ENCODE measurements at regions of chr3 and their contacts with region 1.

Region 1: DNA sequence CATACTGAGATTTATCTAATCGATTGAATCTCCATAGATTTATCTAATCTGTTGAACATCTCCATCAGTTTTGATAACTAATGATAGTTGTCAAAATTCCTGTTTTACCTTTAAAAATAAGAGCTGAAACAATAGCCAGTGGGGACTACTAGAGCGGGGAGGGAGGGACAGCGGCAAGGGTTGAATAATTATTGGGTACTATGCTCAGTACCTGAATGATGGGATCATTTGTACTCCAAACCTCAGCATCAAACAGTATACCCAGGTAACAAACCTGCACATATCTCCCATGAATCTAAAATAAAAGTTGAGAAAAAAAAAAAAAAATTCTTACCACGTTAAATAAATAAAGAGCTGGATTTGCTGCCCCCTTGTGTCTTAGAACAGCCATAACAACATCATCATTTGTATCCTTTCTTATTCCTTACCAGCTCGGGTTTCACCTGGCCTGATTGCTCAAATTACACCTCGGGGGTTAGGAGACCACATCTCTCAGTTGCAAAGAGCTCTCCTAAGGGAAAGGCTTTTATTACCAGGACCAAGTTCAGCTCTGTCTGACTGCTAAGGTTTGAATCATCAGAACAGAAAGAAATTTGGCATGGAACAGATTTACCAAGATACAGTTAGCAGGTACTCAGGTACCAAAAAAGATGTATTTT is 25.7 kb upstream of the RPL39L start:
- H3K4me3 Mint-ChIP-seq: no peak overlapping the region
- H3K27ac Mint-ChIP-seq: no peak overlapping the region
- H3K4me1 Mint-ChIP-seq: peaks cover 6% of the 10 kb centered on the region
- H3K27me3 Mint-ChIP-seq: peaks cover 12% of the 10 kb centered on the region

Region 2: DNA sequence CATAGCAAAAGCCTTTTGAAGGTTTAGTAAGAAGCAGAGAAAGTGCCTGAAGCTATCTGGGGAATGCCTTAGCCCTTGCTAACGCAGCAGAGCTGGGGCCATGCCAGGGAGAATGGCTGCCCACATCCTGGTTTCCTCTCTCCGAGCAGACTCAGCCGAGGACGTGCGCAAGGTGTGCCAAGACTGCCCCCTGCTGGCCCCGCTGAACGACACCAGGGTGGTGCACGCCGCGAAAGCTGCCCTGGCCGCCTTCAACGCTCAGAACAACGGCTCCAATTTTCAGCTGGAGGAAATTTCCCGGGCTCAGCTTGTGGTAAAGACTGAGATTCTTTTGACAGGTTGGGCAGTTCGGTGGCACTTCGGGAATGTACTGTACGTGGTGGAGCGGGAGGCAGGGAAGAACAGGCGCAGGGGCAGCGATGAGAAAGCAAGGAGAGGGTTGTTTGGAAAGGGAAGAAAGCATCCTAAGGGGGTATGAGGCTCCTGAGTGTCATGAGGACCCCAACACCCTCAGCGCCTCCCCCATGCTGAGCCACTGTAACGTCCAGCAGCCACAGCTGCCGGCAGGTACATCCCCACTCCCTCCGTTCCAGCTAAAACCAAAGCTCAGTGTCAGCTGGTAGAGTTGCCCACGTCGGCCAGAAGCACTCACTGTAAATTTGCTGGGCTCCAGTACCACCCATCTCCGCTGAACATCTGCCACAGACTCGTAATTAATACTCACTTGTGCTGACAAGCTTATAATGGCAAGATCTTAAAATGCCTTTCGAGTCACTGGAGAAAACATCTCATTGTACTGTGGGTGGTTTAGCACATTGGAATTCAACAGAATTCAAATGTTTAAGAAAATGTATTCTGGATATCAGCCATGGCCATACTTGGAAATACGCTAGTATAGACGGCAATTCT is 547.7 kb before region 1 on chr3:
- intact Hi-C with region 1: loop called (anchors 10 kb)
- H3K4me3 Mint-ChIP-seq: peak overlapping the region; percentile 60
- H3K27ac Mint-ChIP-seq: no peak overlapping the region
- H3K4me1 Mint-ChIP-seq: peaks cover 14% of the 10 kb centered on the region
- H3K27me3 Mint-ChIP-seq: peaks cover 46% of the 10 kb centered on the region

Region 3: GRCh38 chr3:186849374-186849975 is 315.5 kb before region 1 on chr3:
- intact Hi-C with region 1: loop called (anchors 5 kb)
- H3K4me3 Mint-ChIP-seq: no peak overlapping the region
- H3K27ac Mint-ChIP-seq: no peak overlapping the region
- H3K4me1 Mint-ChIP-seq: peaks cover 47% of the 10 kb centered on the region
- H3K27me3 Mint-ChIP-seq: peaks cover 4% of the 10 kb centered on the region

Region 4: DNA sequence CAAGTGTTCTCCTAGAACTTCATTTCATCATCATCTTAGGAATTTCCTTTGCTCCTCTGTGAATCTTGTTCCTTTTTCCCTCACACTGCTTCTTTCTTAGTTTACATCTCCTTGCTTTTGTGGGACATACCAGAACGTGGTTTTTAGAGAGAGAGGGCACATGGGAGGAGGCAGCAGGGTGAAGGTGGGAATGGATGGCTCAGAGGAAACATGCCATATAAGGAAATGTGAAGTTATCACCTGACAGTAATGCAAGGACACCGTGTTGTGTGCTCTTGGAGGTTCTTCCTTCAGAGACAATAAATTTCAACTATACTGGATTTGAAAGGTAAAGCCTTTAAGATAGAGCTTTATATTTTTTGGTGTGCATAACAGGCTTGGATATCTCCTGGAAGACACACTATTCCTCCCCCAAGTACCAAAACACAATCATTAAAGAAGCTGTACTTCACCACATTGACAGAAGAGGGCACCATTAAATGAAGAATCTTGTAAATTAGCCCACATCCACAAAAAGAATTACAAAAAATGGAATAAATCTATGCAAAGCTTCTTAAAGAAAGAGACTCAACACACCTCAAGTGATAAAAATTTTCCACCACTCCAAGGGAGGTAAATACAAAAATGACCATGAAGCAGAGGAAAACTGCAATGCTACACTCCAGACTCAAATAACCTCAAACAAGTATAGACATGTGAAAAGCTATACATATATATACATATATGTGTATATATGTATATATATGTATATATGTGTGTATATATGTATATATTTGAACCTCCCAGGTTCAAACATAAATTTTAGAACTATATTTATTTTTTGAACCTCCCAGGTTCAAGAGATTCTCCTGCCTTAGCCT is 51.9 kb before region 1 on chr3:
- intact Hi-C with region 1: loop called (anchors 1 kb)
- H3K4me3 Mint-ChIP-seq: no peak overlapping the region
- H3K27ac Mint-ChIP-seq: no peak overlapping the region
- H3K4me1 Mint-ChIP-seq: peaks cover 7% of the 10 kb centered on the region
- H3K27me3 Mint-ChIP-seq: no peaks in the 10 kb centered on the region